ENCODE measurements at regions of chr3 and their contacts with region 1.

Region 1: DNA sequence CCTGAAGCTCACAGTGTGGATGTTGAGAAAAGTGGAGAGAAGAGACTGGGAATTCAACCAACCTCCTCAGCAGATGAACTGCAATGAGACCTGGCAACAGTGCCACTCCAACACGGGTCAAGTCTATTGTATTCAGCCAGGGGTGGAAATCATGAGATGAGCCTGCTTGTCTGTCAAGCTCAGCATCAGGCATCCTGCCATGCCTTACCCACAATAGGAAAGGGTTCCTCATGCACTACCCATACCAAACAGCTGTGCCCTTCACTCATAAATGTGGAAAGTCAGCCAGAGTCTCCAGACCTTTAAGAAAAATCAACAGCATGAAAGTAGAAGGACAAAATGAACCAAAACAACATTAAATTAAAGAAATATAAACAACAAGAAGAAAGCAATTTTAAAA is 542.1 kb downstream of the EPHB1 start:
- DNase-seq: no peak
- ATAC-seq: no peak
- H3K4me3 ChIP-seq: no peak overlapping the region
- H3K27ac ChIP-seq: no peak overlapping the region
- H3K4me1 ChIP-seq: no peaks in the 10 kb centered on the region
- H3K27me3 ChIP-seq: no peaks in the 10 kb centered on the region
- CTCF ChIP-seq: no peak

Region 2: DNA sequence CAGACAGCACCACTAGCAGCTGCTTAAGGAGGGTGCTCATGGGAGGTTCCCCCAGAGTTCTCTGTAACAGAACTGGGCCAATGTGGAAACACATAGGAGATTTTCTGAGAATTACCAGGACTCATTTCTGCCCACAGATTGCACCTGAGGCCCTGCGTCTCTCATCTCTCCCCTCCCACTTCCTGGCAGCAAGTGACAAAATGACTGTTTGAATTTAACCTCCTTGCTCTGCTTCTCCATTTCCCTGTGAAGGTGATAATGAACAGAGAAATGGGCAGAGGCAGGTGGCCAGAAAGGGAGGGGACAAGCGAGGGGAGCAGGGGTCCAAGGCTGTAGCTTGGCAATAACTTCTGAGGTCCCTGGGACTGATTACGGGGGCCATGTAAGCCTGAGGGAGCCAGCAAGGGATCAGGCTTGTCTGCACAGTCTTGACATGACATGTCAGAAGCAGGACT is 534.1 kb before region 1 on chr3:
- intact Hi-C with region 1: loop called in 1 of 3 experiments (anchors 5 kb)
- DNase-seq: no peak
- ATAC-seq: no peak
- H3K4me3 ChIP-seq: no peak overlapping the region
- H3K27ac ChIP-seq: no peak overlapping the region
- H3K4me1 ChIP-seq: no peaks in the 10 kb centered on the region
- H3K27me3 ChIP-seq: peaks cover 0 to 5% (median 0%) of the 10 kb centered on the region in 4 donors
- CTCF ChIP-seq: no peak